ENCODE measurements at regions of chr4 and their contacts with region 1.

Region 1: GRCh38 chr4:41214136-41214824 is at the start of gene APBB2:
- DNase-seq: peak; percentile 95
- ATAC-seq: peak; percentile 92 to 95
- H3K4me3 ChIP-seq: peak within 1 kb of the TSS; percentile 82
- H3K27ac ChIP-seq: peak within 1 kb of the TSS; percentile 86
- H3K4me1 ChIP-seq: peaks cover 31% of the 10 kb centered on the region
- H3K27me3 ChIP-seq: no peaks in the 10 kb centered on the region
- CTCF ChIP-seq: peak; percentile 94
- total RNA-seq, gene APBB2: 59.3 TPM

Region 2: GRCh38 chr4:40924096-40924792 is 290.0 kb before region 1 on chr4:
- intact Hi-C with region 1: loop called (anchors 10 kb)
- DNase-seq: peak; percentile 81
- ATAC-seq: peak; percentile 79 to 83
- H3K4me3 ChIP-seq: no peak overlapping the region
- H3K27ac ChIP-seq: no peak overlapping the region
- H3K4me1 ChIP-seq: peaks cover 4% of the 10 kb centered on the region
- H3K27me3 ChIP-seq: no peaks in the 10 kb centered on the region
- CTCF ChIP-seq: peak; percentile 88

Region 3: GRCh38 chr4:40962551-40963180 is 251.6 kb before region 1 on chr4:
- intact Hi-C with region 1: no loop called
- DNase-seq: no peak
- ATAC-seq: no peak
- H3K4me3 ChIP-seq: no peak overlapping the region
- H3K27ac ChIP-seq: no peak overlapping the region
- H3K4me1 ChIP-seq: peaks cover 9% of the 10 kb centered on the region
- H3K27me3 ChIP-seq: no peaks in the 10 kb centered on the region
- CTCF ChIP-seq: no peak

Region 4: DNA sequence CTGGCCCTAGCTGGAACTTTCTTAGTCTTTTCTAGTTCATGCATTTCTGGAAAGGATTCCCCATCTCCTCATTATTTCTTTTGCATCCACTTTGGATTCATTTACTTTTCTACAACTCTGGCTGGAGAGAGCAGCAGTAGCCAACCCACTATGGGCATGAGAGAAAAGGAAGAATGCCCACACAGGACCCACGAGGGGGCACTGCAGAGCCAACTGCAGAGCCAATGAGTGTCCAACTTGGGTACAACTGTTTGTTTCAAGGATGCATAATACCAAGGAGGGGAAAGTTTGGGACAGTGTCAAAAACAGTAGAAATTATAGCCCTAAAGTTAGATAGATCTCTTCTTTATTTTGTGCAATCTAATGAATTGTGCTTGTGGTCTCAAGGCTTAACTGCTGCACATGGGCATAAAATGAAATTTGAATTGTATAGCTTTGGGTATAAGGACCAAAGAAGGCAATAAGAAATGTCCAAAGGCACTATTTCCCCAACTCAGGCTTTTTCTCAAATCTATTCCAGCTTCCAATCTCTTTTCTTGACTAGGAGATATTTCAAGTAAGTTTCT is 233.9 kb before region 1 on chr4:
- intact Hi-C with region 1: loop called (anchors 5 kb)
- DNase-seq: no peak
- ATAC-seq: peak; percentile 68 to 82
- H3K4me3 ChIP-seq: no peak overlapping the region
- H3K27ac ChIP-seq: no peak overlapping the region
- H3K4me1 ChIP-seq: no peaks in the 10 kb centered on the region
- H3K27me3 ChIP-seq: no peaks in the 10 kb centered on the region
- CTCF ChIP-seq: peak; percentile 45

Measured in lower lobe of right lung (tissue), 2 donors.